AG04449 (cell line): ENCODE measurements at regions of chr2 and their contacts with region 1.

Region 1: GRCh38 chr2:27191053-27191829 is 20.6 kb upstream of the ATRAID start:
- DNase-seq: no peak
- H3K4me3 ChIP-seq: no peak overlapping the region
- CTCF ChIP-seq: peak; percentile 71

Region 2: DNA sequence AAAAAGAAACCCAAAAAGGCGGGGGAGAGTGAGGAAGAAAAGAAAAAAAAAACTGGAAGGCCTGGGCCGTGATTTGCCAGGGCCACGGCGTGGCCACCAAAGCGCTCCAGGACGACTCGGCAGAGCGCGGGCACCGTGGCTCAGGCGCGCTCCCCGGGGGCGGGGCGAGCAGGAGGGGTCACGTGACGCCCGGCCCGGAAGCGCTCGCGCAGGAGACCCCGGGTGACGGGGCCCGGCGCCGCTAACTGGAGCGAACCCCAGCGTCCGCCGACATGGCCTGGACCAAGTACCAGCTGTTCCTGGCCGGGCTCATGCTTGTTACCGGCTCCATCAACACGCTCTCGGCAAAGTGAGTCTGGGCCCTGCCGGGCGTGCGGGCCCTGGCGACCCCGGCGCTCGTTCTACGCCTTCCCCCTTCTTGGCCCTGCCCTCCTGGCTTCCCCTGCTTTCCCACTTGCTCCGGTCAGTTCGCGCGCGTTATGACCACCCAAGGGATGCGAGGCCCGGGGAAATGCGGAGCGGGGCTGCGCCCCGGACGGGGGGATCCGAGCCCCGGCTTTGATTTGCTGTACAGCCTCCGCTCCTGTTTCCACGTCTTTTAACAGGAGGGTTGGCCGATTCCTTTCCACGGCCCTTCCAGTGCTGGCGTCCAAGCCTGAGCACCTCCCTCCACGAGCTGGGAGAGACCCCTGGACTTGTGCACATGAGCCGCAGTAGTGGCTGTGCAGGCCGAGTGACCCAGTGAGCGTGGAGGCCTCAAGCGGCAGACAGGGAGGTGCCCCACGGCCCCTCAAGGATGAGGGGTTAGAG is 427.0 kb before region 1 on chr2 and contains the start of gene SLC35F6:
- CTCF ChIA-PET with region 1: no interaction called
- POLR2A ChIA-PET with region 1: no interaction called
- DNase-seq: no peak
- H3K4me3 ChIP-seq: peak within 1 kb of the TSS; percentile 97
- CTCF ChIP-seq: no peak

Region 3: GRCh38 chr2:26875065-26875634 is 316.1 kb before region 1 on chr2:
- CTCF ChIA-PET with region 1: no interaction called
- POLR2A ChIA-PET with region 1: no interaction called
- DNase-seq: no peak
- H3K4me3 ChIP-seq: no peak overlapping the region
- CTCF ChIP-seq: no peak

Region 4: DNA sequence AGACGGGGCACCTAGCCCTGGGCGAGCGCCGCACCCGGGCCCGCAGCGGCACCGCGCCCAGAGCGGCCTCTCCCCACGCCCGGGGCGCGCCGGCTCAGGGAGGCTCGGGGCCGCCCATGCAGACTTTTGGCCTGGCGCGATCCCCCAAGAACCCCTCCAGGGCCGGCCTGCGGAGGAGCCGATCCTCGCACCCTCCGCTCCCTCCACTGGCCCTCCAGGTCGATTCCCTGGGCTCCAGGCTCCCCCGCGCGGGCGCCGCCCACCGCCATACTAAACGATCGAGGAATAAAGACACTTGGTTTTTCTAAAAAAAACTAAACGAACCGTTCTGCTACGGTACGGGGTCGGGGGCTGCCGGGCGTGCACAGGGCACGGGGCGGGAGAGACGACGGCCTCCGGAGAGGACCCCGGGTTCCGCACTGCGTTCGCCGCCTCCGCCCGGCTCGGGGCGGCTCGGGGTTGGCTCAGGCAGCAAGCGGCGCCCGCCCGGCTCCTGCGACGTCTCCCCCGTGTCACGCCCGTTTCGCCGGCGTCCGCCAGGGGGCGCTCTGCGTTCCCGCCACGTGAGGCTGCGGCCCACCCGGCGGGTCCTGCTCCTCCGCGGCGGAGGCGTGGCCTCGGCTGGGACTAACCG is 105.0 kb before region 1 on chr2:
- CTCF ChIA-PET with region 1: interaction called, 33 read pairs
- POLR2A ChIA-PET with region 1: no interaction called
- DNase-seq: no peak
- H3K4me3 ChIP-seq: peak overlapping the region; percentile 42
- CTCF ChIP-seq: peak; percentile 94

Region 5: DNA sequence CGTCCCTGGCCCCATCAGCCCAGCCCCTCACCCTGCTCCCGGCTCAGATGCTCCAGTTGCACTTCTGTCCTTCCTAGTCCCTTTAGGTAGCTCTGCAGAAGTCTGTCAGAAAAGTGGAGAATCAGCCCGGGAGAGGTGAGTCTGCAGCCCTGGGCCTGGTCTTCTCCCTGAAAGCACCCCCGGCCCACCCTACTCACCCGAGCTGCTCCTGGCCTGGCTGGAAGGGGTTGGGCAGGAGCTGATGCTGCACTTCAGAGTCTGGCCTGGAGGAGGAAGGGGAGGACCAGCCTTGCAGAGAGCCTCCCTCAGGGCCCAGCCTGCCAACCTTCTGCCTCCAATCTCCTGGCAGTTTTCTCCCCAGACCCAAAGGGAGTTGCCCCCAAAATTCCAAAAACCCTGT is 88.9 kb before region 1 on chr2:
- CTCF ChIA-PET with region 1: interaction called, 217 read pairs
- POLR2A ChIA-PET with region 1: no interaction called
- DNase-seq: no peak
- H3K4me3 ChIP-seq: no peak overlapping the region
- CTCF ChIP-seq: no peak

Region 6: DNA sequence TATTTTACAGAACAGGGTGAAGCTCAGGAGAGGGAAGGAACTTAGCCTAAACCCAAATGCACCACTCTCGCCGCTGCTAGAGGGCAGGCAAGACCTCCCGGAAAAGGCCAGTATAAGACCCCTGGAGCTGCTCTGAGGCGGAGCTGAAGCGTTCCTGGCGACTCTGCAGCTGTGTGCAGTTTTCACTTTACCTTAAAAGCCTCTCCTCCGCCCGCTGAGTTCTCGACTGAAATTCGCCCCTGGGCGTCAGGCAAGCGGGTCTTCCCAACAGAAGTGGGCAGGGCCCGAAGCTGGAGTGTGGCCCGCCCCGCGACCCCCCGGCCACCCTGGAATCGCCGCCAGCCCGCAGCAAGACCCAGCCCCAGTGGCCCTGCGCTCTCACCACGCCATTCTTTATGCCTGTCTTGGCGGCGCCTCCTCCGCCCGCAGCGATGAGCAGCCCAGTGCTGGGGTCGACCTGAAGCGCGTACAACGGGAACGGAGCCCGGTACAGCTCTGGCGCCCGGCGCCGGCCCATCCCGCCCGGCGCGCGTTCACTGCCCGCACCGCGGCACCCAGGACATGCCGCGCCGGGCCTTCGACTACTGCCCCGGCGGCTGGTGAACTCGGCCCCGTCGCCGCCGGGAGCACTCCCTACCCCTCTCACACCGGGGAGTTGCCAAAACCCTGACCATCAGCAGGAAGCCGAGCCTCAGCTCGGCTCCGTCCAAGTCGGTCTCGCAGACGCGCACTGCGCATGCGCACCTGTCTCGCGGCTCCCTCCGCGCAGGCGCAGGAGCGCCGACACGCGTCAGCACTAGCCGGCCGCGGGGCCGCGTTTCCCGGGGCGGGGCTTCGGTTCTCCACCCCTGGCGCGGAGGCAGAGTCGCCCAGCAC is 57.1 kb before region 1 on chr2 and contains the start of gene PREB:
- CTCF ChIA-PET with region 1: interaction called, 51 read pairs
- POLR2A ChIA-PET with region 1: no interaction called
- DNase-seq: peak; percentile 36
- H3K4me3 ChIP-seq: peak within 1 kb of the TSS; percentile 84
- CTCF ChIP-seq: peak; percentile 61

Region 7: DNA sequence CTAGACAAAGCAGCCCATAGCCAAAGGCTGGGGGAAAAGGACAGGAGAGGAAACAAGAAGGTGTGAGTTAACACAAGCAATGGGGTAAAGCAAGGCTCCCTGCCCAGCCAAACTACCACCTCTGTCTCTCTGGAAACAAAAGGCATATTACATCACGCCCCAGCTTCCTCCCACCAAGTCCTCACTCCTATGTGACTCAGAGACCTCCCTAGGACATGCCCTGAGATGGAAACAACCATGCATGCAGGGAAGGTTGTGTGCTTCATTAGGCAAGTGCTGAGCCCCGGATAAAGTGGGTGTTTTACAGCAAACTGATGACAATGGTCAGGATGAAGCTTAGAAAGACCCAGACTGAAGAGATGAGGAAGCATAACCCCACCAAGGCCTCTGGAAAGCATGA is 11.6 kb after region 1 on chr2:
- CTCF ChIA-PET with region 1: interaction called, 20 read pairs
- POLR2A ChIA-PET with region 1: interaction called, 3 read pairs
- DNase-seq: no peak
- H3K4me3 ChIP-seq: no peak overlapping the region
- CTCF ChIP-seq: no peak